ENCODE measurements at regions of chr1 and their contacts with region 1.

Region 1: DNA sequence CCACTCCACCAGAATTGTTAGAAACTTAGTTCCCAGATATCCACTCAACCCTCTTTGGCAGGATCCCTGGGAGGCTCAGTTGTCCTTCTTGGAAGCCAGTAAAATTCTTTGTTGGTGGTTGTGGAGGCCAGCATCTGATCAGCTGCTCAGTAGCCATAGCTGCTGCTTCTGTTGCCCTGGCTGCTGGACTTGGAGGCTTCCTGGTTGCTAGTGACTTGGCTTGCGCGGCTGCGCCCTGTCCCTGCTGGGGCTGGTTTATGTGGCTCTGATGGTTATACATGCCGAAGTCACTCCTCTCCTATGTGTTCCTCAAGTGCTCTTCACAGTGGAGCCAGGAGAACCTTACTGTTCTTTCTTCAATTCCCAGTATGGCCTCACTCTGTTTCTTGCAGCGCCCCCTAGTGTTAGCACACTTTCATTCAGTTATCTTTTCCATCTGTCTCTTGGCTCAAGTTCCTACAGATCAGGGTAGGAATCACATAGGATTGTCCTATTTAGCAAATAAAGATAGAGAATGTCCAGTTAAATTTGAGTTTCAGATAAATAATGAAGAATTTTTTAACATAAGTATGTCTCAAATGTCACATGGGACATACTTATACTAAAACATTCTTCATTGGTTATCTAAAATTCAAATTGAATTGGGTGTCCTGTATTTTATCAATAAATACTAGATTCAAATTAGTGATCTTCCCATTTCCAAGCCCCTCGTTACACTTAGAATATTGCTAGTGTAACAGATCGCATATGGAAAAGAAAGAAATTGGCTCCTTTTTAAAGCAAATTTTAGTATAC is 176.4 kb downstream of the TGFB2 start:
- DNase-seq: peak; percentile 57 to 73 (median 67)
- ATAC-seq: peak; percentile 91
- H3K4me3 ChIP-seq: no peak overlapping the region
- H3K27ac ChIP-seq: no peak overlapping the region
- H3K4me1 ChIP-seq: no peaks in the 10 kb centered on the region
- H3K27me3 ChIP-seq: peaks cover 0 to 3% of the 10 kb centered on the region in 2 experiments; a peak in 1 of 5 replicates
- CTCF ChIP-seq: peak; percentile 65 to 83 (median 72)
- EP300 ChIP-seq: no peak
- POLR2A ChIP-seq: no peak
- RAD21 ChIP-seq: peak in 1 of 2 experiments; percentile 75; a peak in 3 of 4 replicates

Region 2: DNA sequence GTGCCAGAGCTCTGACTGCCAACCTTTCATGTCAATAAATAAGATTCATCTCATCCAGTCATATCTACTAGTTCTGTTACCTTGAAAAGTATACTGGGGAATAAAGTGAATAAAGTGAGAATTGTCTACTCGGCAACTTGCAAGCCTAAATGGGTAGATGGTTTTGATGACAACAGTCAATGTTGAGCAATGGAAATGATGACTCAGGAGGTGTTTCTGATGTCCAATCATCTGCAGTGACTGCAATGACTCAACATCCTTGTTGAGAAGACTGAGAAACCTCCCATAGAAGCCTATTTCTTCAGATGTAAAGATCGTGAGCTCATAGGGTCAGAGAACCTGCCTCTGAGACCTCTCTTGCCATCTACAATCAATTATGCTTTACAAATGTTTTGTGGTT is 614.1 kb before region 1 on chr1:
- CTCF ChIA-PET with region 1: no interaction called
- POLR2A ChIA-PET with region 1: no interaction called
- in situ Hi-C with region 1: no loop called
- intact Hi-C with region 1: no loop called
- DNase-seq: no peak
- ATAC-seq: no peak
- H3K4me3 ChIP-seq: no peak overlapping the region
- H3K27ac ChIP-seq: no peak overlapping the region
- H3K4me1 ChIP-seq: no peaks in the 10 kb centered on the region
- H3K27me3 ChIP-seq: no peaks in the 10 kb centered on the region
- CTCF ChIP-seq: no peak
- EP300 ChIP-seq: no peak
- POLR2A ChIP-seq: no peak
- RAD21 ChIP-seq: no peak

Region 3: DNA sequence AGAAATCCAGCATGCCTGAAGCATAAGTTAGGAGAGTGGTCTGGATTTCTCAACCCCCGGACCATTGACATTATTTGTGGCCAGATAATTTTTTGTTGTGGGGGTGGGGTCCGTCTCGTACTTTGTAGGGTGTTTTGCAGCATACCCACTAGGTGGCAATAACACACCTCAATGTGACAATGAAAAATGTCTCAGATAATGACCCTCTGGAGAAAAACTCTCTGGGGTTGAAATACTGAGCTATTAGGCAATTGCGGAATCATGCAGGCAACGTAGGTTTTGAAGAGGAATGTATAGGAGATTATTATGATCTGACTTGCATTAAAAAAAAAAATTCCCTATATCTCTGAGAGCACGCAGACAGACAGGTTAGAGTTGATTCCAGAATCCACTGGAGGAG is 261.8 kb before region 1 on chr1:
- CTCF ChIA-PET with region 1: no interaction called
- POLR2A ChIA-PET with region 1: no interaction called
- in situ Hi-C with region 1: no loop called
- intact Hi-C with region 1: loop called (anchors 1 kb)
- DNase-seq: peak; percentile 33 to 69 (median 51)
- ATAC-seq: peak; percentile 96
- H3K4me3 ChIP-seq: no peak overlapping the region
- H3K27ac ChIP-seq: no peak overlapping the region
- H3K4me1 ChIP-seq: no peaks in the 10 kb centered on the region
- H3K27me3 ChIP-seq: peaks cover 0 to 3% of the 10 kb centered on the region in 2 experiments; a peak in 1 of 5 replicates
- CTCF ChIP-seq: peak; percentile 62 to 72 (median 68)
- EP300 ChIP-seq: no peak
- POLR2A ChIP-seq: no peak
- RAD21 ChIP-seq: peak; percentile 15 to 71; a peak in 3 of 4 replicates

Region 4: DNA sequence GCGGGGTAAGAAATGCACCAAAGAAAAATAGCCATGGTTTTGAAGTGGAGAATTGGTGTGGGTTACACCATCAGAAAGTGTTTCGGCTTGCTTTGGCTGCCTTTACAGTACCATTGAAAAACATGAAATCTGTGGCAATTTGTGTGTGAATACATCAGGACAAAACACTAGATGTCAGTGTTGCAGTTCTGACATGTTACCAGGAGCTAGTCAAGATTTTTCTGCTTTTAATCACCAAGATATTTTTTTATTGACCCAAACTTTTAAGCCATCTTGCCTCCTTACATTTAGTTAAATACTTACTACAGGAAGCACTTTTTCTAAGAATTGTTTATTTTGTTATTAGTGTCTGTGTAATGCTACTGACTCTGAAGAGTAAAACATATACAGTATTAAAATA is 222.2 kb before region 1 on chr1:
- CTCF ChIA-PET with region 1: interaction called, 4 read pairs
- POLR2A ChIA-PET with region 1: no interaction called
- in situ Hi-C with region 1: no loop called
- intact Hi-C with region 1: loop called (anchors 1 kb)
- DNase-seq: peak in 3 of 4 experiments; percentile 25 to 78 (median 54)
- ATAC-seq: peak; percentile 76
- H3K4me3 ChIP-seq: no peak overlapping the region
- H3K27ac ChIP-seq: no peak overlapping the region
- H3K4me1 ChIP-seq: peaks cover 15 to 42% of the 10 kb centered on the region in 2 experiments
- H3K27me3 ChIP-seq: no peaks in the 10 kb centered on the region
- CTCF ChIP-seq: peak; percentile 54 to 80 (median 70)
- EP300 ChIP-seq: 0 out of 2 replicates have a peak, but pooled peaks have one; percentile 6
- POLR2A ChIP-seq: no peak
- RAD21 ChIP-seq: peak; percentile 69 to 82

Region 5: DNA sequence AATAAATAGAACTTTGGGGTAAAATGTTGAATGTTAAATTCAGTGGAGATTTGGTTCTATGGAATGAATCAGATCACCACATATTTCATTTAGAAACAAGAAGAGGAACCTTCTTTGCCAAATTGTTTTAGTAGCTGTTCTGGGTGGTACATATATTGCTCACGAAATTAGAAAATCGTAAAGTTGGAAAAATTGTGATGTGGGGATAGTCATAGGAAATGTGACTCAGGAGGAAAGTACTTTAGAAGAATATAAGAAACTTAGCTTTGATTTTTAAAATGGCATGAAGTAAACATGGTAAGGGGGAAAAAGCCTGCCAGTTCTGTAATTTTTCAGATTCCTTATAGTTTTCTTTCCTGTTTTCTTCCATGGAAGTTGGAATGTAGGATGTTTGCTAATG is 209.1 kb before region 1 on chr1:
- CTCF ChIA-PET with region 1: no interaction called
- POLR2A ChIA-PET with region 1: no interaction called
- in situ Hi-C with region 1: no loop called
- intact Hi-C with region 1: no loop called
- DNase-seq: no peak
- ATAC-seq: no peak
- H3K4me3 ChIP-seq: no peak overlapping the region
- H3K27ac ChIP-seq: no peak overlapping the region
- H3K4me1 ChIP-seq: peaks cover 0 to 8% of the 10 kb centered on the region in 2 experiments; a peak in 2 of 5 replicates
- H3K27me3 ChIP-seq: no peaks in the 10 kb centered on the region
- CTCF ChIP-seq: no peak
- EP300 ChIP-seq: no peak
- POLR2A ChIP-seq: no peak
- RAD21 ChIP-seq: no peak

Region 6: GRCh38 chr1:218339267-218339831 is 182.2 kb before region 1 on chr1:
- CTCF ChIA-PET with region 1: interaction called, 3 read pairs
- POLR2A ChIA-PET with region 1: no interaction called
- in situ Hi-C with region 1: no loop called
- intact Hi-C with region 1: loop called (anchors 2 kb)
- DNase-seq: peak in 3 of 4 experiments; percentile 35 to 53 (median 40)
- ATAC-seq: peak; percentile 76
- H3K4me3 ChIP-seq: no peak overlapping the region
- H3K27ac ChIP-seq: no peak overlapping the region
- H3K4me1 ChIP-seq: no peaks in the 10 kb centered on the region
- H3K27me3 ChIP-seq: no peaks in the 10 kb centered on the region
- CTCF ChIP-seq: peak; percentile 40 to 75 (median 49); a peak in 4 of 6 replicates
- EP300 ChIP-seq: no peak
- POLR2A ChIP-seq: no peak
- RAD21 ChIP-seq: peak; percentile 73 to 84

Region 7: DNA sequence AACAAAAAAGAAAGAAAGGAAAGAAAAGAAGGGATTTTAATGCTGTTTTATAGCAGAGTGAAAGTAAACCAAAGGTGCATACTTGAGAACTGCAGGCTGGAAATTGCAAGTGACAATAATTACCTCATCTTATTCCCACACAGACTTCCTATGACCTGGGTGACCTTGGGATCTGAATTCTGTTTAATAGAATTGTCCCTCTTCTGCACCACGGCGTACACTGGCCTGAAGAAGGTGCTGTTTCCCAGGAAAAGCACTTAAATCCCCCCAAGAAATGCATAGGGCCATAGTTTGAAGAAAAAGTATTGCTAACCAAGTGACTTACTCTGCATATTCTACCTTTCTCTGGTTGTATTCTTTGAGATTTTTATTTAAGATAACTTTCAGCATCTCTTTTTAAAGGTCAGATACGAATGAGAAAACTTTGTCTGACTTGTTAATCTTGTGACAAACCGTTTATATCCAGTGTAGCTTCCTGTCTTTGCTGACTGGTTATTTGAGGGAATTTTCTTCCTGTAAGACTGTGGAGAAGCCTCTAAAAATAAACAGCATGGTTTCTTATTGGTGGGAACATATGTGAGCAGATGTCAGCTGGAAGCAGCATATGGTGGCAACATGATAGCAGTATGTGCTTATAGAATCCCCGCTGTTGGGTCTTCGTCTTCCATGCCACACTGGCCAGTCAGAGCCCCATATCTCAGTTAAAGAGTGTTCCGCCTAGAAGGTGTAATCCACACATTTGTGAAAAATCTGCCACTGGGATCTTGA is 160.1 kb before region 1 on chr1:
- CTCF ChIA-PET with region 1: no interaction called
- POLR2A ChIA-PET with region 1: no interaction called
- in situ Hi-C with region 1: no loop called
- intact Hi-C with region 1: loop called (anchors 1 kb)
- DNase-seq: peak in 2 of 4 experiments; percentile 22 to 37
- ATAC-seq: peak; percentile 72
- H3K4me3 ChIP-seq: no peak overlapping the region
- H3K27ac ChIP-seq: no peak overlapping the region
- H3K4me1 ChIP-seq: peaks cover 0 to 10% of the 10 kb centered on the region in 2 experiments; a peak in 3 of 5 replicates
- H3K27me3 ChIP-seq: no peaks in the 10 kb centered on the region
- CTCF ChIP-seq: peak; percentile 46 to 65 (median 60); a peak in 5 of 6 replicates
- EP300 ChIP-seq: no peak
- POLR2A ChIP-seq: no peak
- RAD21 ChIP-seq: peak; percentile 35 to 74

Region 8: GRCh38 chr1:218459450-218459849 is 62.1 kb before region 1 on chr1:
- CTCF ChIA-PET with region 1: no interaction called
- POLR2A ChIA-PET with region 1: no interaction called
- in situ Hi-C with region 1: no loop called
- intact Hi-C with region 1: no loop called
- DNase-seq: peak in 1 of 4 experiments; percentile 6
- ATAC-seq: peak; percentile 62; the same call in 2 of the 3 replicates
- H3K4me3 ChIP-seq: no peak overlapping the region
- H3K27ac ChIP-seq: no peak overlapping the region
- H3K4me1 ChIP-seq: no peaks in the 10 kb centered on the region; a peak in 1 of 5 replicates
- H3K27me3 ChIP-seq: 0 out of 5 replicates have a peak, but pooled peaks cover 0 to 4% of the 10 kb centered on the region in 2 experiments
- CTCF ChIP-seq: no peak
- EP300 ChIP-seq: no peak
- POLR2A ChIP-seq: no peak
- RAD21 ChIP-seq: no peak

Region 9: DNA sequence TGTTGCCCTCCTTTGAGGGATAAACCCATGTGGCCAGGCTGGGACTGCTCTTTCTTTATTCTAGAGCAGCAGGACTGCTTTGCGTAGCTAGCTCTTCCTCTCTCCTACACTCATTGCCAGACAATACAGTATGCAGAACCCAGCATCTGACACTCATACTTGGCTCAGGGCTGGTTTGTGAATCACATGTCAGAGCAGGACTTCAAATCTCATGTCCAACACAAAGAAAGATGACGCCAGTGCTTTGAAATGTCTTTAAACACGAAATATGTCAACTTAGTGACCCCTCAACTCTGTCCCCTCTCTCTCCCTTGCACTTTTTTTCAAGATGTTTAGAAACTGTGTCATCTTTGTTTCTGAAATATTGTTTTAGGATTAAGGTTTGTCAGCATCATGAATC is 41.4 kb before region 1 on chr1:
- CTCF ChIA-PET with region 1: no interaction called
- POLR2A ChIA-PET with region 1: no interaction called
- in situ Hi-C with region 1: no loop called
- intact Hi-C with region 1: no loop called
- DNase-seq: no peak
- ATAC-seq: no peak
- H3K4me3 ChIP-seq: no peak overlapping the region
- H3K27ac ChIP-seq: no peak overlapping the region
- H3K4me1 ChIP-seq: no peaks in the 10 kb centered on the region
- H3K27me3 ChIP-seq: no peaks in the 10 kb centered on the region
- CTCF ChIP-seq: no peak
- EP300 ChIP-seq: no peak
- POLR2A ChIP-seq: no peak
- RAD21 ChIP-seq: no peak

Measured in K562 (cell line).